Naive thymus-derived CD4-positive, alpha-beta T cell (primary cell): ENCODE measurements at regions of chr6 and their contacts with region 1.

Region 1: GRCh38 chr6:26285143-26286134 is 79.6 kb upstream of the BTN3A2 start:
- DNase-seq: peak; percentile 72 to 97 (median 92)
- ATAC-seq: peak; percentile 91
- H3K4me3 ChIP-seq: peak overlapping the region; percentile 88
- H3K4me3 Mint-ChIP-seq: peak overlapping the region; percentile 86 to 96 (median 90)
- H3K27ac ChIP-seq: peak overlapping the region; percentile 91
- H3K27ac Mint-ChIP-seq: peak overlapping the region; percentile 91 to 100 (median 98)
- H3K4me1 ChIP-seq: peaks cover 0 to 8% of the 10 kb centered on the region in 2 donors
- H3K4me1 Mint-ChIP-seq: peaks cover 7 to 48% (median 33%) of the 10 kb centered on the region in 7 donors
- H3K27me3 ChIP-seq: no peaks in the 10 kb centered on the region
- H3K27me3 Mint-ChIP-seq: peaks cover 0 to 9% (median 5%) of the 10 kb centered on the region in 5 donors

Region 2: DNA sequence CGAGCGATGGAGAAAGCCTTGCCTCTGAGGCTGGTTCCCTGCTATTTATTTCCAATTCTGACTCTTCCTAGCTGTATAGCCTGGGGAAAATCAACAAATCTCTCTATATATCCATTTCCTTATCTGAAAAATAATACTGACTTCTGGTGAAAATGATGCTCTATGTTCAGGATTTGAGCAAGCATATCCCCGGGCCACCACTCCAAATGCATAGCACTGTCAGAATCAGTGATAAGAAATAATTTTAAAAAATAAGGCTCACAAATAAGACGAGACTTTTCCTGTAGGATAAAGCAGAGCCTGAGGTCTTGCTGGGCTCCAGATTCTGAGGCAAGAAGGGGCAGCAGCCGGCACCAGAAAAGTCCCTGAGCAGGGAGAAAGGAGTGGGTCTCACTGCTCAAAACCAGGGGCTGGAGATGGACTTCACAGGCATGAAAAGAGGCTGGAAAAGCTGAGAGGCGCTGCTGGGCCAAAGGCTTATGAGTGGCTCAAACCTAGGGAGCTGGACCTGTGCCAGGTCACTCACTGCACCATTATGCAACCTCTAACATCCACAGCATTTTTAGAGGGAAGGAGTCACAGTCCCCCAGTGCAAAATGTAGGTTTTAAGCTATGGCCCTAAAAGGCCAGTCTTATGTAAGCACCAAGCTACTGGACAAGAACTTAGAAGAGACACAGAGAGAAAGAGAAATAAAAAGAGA is 579.0 kb before region 1 on chr6:
- CTCF ChIA-PET with region 1: no interaction called
- POLR2A ChIA-PET with region 1: no interaction called
- intact Hi-C with region 1: no loop called
- DNase-seq: no peak
- ATAC-seq: no peak
- H3K4me3 ChIP-seq: no peak overlapping the region
- H3K4me3 Mint-ChIP-seq: no peak overlapping the region
- H3K27ac ChIP-seq: no peak overlapping the region
- H3K27ac Mint-ChIP-seq: no peak overlapping the region
- H3K4me1 ChIP-seq: no peaks in the 10 kb centered on the region
- H3K4me1 Mint-ChIP-seq: no peaks in the 10 kb centered on the region
- H3K27me3 ChIP-seq: no peaks in the 10 kb centered on the region
- H3K27me3 Mint-ChIP-seq: peaks cover 4 to 32% (median 9%) of the 10 kb centered on the region in 5 donors

Region 3: GRCh38 chr6:26103770-26104456 is 181.5 kb before region 1 on chr6:
- CTCF ChIA-PET with region 1: no interaction called
- POLR2A ChIA-PET with region 1: interaction called, 3 read pairs
- intact Hi-C with region 1: loop called in 1 of 2 experiments (anchors 1 kb)
- DNase-seq: peak; percentile 83 to 96 (median 95)
- ATAC-seq: peak; percentile 94
- H3K4me3 ChIP-seq: peak overlapping the region; percentile 40
- H3K4me3 Mint-ChIP-seq: peak overlapping the region; percentile 81 to 97 (median 89)
- H3K27ac ChIP-seq: peak overlapping the region; percentile 75
- H3K27ac Mint-ChIP-seq: peak overlapping the region; percentile 96 to 100 (median 98)
- H3K4me1 ChIP-seq: peaks cover 4 to 12% of the 10 kb centered on the region in 2 donors
- H3K4me1 Mint-ChIP-seq: peaks cover 7 to 25% (median 22%) of the 10 kb centered on the region in 7 donors
- H3K27me3 ChIP-seq: no peaks in the 10 kb centered on the region
- H3K27me3 Mint-ChIP-seq: peaks cover 0 to 3% (median 0%) of the 10 kb centered on the region in 5 donors

Region 4: DNA sequence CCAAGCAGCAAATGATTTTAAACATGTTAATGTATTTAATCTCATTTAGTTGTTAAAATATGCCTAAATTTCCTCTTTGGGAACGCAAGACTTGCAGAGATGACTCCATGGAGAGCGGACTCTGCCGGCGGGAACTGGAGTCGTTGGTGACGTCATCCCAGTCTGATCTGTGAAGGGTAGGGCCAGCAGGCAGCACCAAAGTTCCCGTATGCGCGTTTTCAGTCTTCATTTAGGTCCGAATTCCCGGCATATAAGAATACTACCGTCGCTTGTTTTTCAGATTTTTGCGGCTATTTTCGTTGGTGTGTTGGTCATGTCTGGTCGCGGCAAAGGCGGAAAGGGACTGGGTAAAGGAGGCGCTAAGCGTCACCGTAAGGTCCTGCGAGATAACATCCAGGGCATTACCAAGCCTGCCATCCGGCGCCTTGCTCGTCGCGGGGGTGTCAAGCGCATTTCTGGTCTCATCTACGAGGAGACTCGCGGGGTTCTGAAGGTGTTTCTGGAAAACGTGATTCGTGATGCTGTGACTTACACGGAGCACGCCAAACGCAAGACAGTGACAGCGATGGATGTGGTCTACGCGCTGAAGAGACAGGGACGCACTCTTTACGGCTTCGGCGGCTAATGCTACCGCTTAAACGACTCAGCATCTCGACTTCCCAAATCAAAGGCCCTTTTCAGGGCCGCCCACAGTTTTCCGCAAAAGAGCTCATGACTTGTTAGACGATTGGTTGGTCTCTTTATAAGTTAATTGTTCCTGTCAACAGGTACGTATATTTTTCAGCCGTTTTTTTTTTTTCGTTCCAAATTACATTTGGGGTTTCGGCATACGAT is 80.9 kb before region 1 on chr6:
- CTCF ChIA-PET with region 1: interaction called, 4 read pairs
- POLR2A ChIA-PET with region 1: interaction called, 161 read pairs
- intact Hi-C with region 1: loop called (anchors 1 kb)
- DNase-seq: peak; percentile 67 to 95 (median 89)
- ATAC-seq: peak; percentile 72
- H3K4me3 ChIP-seq: peak overlapping the region; percentile 77
- H3K4me3 Mint-ChIP-seq: no peak overlapping the region
- H3K27ac ChIP-seq: peak overlapping the region; percentile 90
- H3K27ac Mint-ChIP-seq: no peak overlapping the region
- H3K4me1 ChIP-seq: peaks cover 20 to 23% of the 10 kb centered on the region in 2 donors
- H3K4me1 Mint-ChIP-seq: peaks cover 9 to 36% (median 26%) of the 10 kb centered on the region in 7 donors
- H3K27me3 ChIP-seq: no peaks in the 10 kb centered on the region
- H3K27me3 Mint-ChIP-seq: peaks cover 0 to 5% (median 0%) of the 10 kb centered on the region in 5 donors

Region 5: DNA sequence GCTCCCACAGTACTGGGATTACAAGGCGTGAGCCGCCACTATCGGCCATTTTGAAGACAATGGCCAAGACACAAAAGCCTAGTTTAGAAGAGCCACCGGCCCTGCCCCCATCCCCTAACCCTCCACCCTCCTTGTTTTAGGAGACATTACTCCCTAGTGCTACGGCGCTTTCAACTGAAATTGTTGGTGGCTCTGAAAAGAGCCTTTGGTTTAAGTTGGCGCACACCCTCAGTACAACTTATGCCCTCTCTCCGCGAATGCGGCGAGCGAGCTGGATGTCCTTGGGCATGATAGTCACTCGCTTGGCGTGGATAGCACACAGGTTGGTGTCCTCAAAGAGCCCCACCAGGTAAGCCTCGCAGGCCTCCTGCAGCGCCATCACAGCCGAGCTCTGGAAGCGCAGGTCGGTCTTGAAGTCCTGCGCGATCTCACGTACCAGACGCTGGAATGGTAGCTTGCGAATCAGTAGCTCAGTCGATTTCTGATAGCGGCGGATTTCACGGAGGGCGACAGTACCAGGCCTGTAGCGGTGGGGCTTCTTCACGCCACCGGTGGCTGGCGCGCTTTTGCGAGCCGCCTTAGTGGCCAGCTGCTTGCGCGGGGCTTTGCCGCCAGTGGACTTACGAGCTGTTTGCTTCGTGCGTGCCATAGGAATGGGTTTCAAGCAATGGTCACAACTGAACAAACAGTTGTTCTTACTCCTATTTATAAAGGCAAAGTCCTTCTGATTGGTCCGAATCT is 35.3 kb before region 1 on chr6:
- CTCF ChIA-PET with region 1: interaction called, 6 read pairs
- POLR2A ChIA-PET with region 1: interaction called, 40 read pairs
- intact Hi-C with region 1: loop called (anchors 1 kb)
- DNase-seq: peak; percentile 53 to 85 (median 80)
- ATAC-seq: peak; percentile 85
- H3K4me3 ChIP-seq: peak overlapping the region; percentile 84
- H3K4me3 Mint-ChIP-seq: peak overlapping the region; percentile 88 to 100 (median 96)
- H3K27ac ChIP-seq: peak overlapping the region; percentile 71
- H3K27ac Mint-ChIP-seq: peak overlapping the region; percentile 85 to 97 (median 94)
- H3K4me1 ChIP-seq: peaks cover 4 to 19% of the 10 kb centered on the region in 2 donors
- H3K4me1 Mint-ChIP-seq: peaks cover 20 to 48% (median 39%) of the 10 kb centered on the region in 7 donors
- H3K27me3 ChIP-seq: no peaks in the 10 kb centered on the region
- H3K27me3 Mint-ChIP-seq: no peaks in the 10 kb centered on the region

Region 6: GRCh38 chr6:26329763-26330511 is 44.5 kb after region 1 on chr6:
- CTCF ChIA-PET with region 1: no interaction called
- POLR2A ChIA-PET with region 1: interaction called, 15 read pairs
- intact Hi-C with region 1: loop called in 1 of 2 experiments (anchors 2 kb)
- DNase-seq: peak; percentile 26 to 76 (median 69)
- ATAC-seq: peak; percentile 41
- H3K4me3 ChIP-seq: no peak overlapping the region
- H3K4me3 Mint-ChIP-seq: peak overlapping the region; percentile 35 to 97 (median 79)
- H3K27ac ChIP-seq: no peak overlapping the region
- H3K27ac Mint-ChIP-seq: peak overlapping the region; percentile 37 to 98 (median 95)
- H3K4me1 ChIP-seq: peaks cover 20 to 21% of the 10 kb centered on the region in 2 donors
- H3K4me1 Mint-ChIP-seq: peaks cover 16 to 62% (median 57%) of the 10 kb centered on the region in 7 donors
- H3K27me3 ChIP-seq: peaks cover 0 to 7% of the 10 kb centered on the region in 2 donors
- H3K27me3 Mint-ChIP-seq: peaks cover 4 to 49% (median 39%) of the 10 kb centered on the region in 5 donors

Region 7: DNA sequence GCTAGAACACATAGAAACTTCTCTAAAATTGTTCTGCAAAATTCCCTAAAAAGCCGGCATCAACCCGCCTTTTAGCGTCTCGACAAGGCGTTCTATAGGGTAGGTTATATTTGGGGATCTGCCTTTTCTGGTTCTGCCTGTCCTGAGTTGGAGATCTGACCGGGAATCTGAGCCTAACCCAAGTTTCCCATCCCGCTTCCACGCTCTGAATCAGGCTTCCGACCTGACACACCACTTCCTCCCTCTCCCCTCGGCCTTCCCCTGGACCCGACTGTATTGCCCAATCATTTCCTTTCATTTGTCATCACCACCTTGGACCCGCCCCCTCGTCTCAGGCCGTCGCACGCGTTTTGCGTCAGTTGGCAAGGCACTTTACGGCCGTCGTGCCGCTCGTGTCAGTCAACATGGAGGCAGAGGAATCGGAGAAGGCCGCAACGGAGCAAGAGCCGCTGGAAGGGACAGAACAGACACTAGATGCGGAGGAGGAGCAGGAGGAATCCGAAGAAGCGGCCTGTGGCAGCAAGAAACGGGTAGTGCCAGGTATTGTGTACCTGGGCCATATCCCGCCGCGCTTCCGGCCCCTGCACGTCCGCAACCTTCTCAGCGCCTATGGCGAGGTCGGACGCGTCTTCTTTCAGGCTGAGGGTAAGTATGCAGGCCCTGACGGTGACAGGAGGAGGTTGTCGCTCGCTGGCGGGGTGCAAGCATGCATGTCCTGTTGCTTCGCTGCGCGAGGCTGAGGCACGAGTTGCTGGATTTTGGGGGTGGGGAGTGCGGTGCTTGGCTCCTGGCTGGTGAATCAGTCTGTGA is 311.3 kb after region 1 on chr6 and contains the start of gene ABT1:
- CTCF ChIA-PET with region 1: interaction called, 3 read pairs
- POLR2A ChIA-PET with region 1: no interaction called
- intact Hi-C with region 1: loop called in 1 of 2 experiments (anchors 1 kb)
- DNase-seq: peak; percentile 87 to 96 (median 95)
- ATAC-seq: peak; percentile 95
- H3K4me3 ChIP-seq: peak within 1 kb of the TSS; percentile 81
- H3K4me3 Mint-ChIP-seq: no peak within 1 kb of the TSS
- H3K27ac ChIP-seq: peak within 1 kb of the TSS; percentile 89
- H3K27ac Mint-ChIP-seq: peak within 1 kb of the TSS in 1 of 9 donors; percentile 92
- H3K4me1 ChIP-seq: peaks cover 17 to 22% of the 10 kb centered on the region in 2 donors
- H3K4me1 Mint-ChIP-seq: peaks cover 5 to 20% (median 10%) of the 10 kb centered on the region in 7 donors
- H3K27me3 ChIP-seq: peaks cover 8 to 14% of the 10 kb centered on the region in 2 donors
- H3K27me3 Mint-ChIP-seq: peaks cover 3 to 28% (median 16%) of the 10 kb centered on the region in 5 donors
- total RNA-seq, gene ABT1: 23.3 to 37.5 (median 35.0) TPM

Region 8: GRCh38 chr6:28005124-28005890 is 1719.9 kb after region 1 on chr6:
- CTCF ChIA-PET with region 1: no interaction called
- POLR2A ChIA-PET with region 1: no interaction called
- intact Hi-C with region 1: no loop called
- DNase-seq: no peak
- ATAC-seq: no peak
- H3K4me3 ChIP-seq: no peak overlapping the region
- H3K4me3 Mint-ChIP-seq: no peak overlapping the region
- H3K27ac ChIP-seq: no peak overlapping the region
- H3K27ac Mint-ChIP-seq: no peak overlapping the region
- H3K4me1 ChIP-seq: no peaks in the 10 kb centered on the region
- H3K4me1 Mint-ChIP-seq: peaks cover 0 to 2% (median 0%) of the 10 kb centered on the region in 7 donors
- H3K27me3 ChIP-seq: no peaks in the 10 kb centered on the region
- H3K27me3 Mint-ChIP-seq: peaks cover 6 to 48% (median 25%) of the 10 kb centered on the region in 5 donors